Sciatic nerve (tissue), 2 donors: ENCODE measurements at regions of chr6 and their contacts with region 1.

Region 1: DNA sequence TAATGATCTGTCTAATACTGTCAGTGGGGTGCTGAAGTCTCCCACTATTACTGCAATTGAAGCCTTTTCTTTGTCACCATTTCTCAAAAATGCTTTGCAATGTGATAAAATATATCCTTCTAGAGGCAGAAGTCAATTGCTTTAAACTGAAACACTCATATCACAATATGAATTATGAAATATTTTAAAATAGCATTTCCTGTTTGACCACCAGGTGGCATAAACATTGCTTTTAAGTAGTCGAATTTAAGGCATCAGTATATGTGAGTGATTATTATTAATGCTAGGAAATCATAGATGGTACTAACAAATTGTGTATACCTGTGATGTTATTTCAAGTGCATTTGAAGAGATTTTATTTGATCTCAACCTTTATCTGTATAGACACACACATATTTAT is 87.5 kb downstream of the MEI4 start:
- DNase-seq: no peak
- ATAC-seq: no peak

Region 2: DNA sequence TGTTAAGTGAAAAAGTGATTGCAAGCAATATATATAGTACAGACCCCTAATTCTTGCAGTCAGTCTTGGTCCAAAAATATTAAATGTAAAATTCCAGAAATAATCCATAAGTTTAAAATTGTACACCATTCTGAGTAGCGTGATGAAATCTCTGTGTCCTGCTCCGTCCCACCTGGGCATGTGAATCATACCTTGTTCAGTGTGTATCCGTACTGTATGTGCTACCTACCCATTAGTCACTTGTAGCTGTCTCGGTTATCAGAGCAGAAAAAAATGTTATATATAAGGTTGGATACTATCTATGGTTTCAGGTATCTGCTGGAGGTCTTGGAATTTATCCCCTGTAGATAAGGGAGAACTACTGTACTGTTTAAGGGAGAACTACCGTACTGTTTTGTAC is 1143.3 kb after region 1 on chr6:
- intact Hi-C with region 1: no loop called
- DNase-seq: no peak
- ATAC-seq: no peak

Region 3: GRCh38 chr6:79280756-79281155 is 1540.4 kb after region 1 on chr6:
- intact Hi-C with region 1: loop called (anchors 5 kb)
- DNase-seq: no peak
- ATAC-seq: no peak